Activated T-helper 1 cell treated with anti-CD3 and anti-CD28 coated beads, Interleukin-12 subunit alpha, Interleukin-12 subunit beta, Interleukin-2, Interleukin-4 antibody, amounts not matched to agents 30 ng/mL and 10 ng/mL and 1 ng/mL, durations not matched to agents 14 hours and 24 hours and 36 hours (primary cell): ENCODE measurements at regions of chr17 and their contacts with region 1.

Region 1: DNA sequence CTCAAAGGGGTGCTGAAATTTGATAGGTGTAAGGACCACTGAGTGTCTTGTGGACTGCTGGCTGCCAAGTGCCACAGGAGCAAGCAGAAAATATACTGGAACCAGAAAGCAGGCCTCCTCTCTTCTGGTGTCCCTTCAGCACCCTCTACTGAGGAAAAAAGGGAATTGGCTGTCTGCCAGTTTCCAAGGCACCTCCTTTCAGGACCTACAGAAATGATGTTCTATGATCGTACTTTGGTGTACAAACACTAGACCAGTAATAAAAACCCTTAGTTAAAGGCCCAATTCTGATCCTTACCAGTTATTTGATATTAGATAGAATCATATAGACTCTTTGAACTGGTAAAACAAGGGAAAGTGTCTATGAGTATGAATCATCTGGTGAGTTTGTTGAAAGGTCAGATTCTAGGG is 35.8 kb upstream of the BCAS3 start:
- DNase-seq: peak; percentile 26
- H3K4me3 Mint-ChIP-seq: no peak overlapping the region
- H3K27ac Mint-ChIP-seq: no peak overlapping the region
- H3K4me1 Mint-ChIP-seq: peaks cover 15% of the 10 kb centered on the region
- H3K27me3 Mint-ChIP-seq: no peaks in the 10 kb centered on the region

Region 2: DNA sequence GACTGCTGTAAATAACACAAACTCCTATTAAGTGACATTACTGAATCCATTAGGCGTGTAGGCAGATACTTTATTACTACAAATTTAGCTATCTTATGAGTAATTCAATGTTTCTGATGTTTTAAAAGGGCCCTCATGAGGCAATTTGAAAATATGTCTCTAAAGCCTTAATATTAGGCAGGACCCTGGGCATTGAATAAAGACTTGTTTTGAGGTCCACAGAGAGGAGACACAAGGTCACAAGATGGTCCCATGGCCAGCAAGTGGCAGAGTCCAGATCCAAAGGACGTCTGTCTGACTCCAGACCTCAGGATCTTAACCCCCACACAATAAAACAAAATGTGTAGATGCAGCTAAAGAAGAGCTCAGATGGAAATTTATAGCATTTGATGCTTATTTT is 531.3 kb before region 1 on chr17:
- intact Hi-C with region 1: no loop called
- DNase-seq: no peak
- H3K4me3 Mint-ChIP-seq: no peak overlapping the region
- H3K27ac Mint-ChIP-seq: no peak overlapping the region
- H3K4me1 Mint-ChIP-seq: no peaks in the 10 kb centered on the region
- H3K27me3 Mint-ChIP-seq: peaks cover 21% of the 10 kb centered on the region

Region 3: GRCh38 chr17:60421273-60421934 is 220.4 kb before region 1 on chr17:
- intact Hi-C with region 1: loop called (anchors 1 kb)
- DNase-seq: peak; percentile 63
- H3K4me3 Mint-ChIP-seq: peak overlapping the region; percentile 78
- H3K27ac Mint-ChIP-seq: peak overlapping the region; percentile 42
- H3K4me1 Mint-ChIP-seq: peaks cover 7% of the 10 kb centered on the region
- H3K27me3 Mint-ChIP-seq: peaks cover 6% of the 10 kb centered on the region

Region 4: DNA sequence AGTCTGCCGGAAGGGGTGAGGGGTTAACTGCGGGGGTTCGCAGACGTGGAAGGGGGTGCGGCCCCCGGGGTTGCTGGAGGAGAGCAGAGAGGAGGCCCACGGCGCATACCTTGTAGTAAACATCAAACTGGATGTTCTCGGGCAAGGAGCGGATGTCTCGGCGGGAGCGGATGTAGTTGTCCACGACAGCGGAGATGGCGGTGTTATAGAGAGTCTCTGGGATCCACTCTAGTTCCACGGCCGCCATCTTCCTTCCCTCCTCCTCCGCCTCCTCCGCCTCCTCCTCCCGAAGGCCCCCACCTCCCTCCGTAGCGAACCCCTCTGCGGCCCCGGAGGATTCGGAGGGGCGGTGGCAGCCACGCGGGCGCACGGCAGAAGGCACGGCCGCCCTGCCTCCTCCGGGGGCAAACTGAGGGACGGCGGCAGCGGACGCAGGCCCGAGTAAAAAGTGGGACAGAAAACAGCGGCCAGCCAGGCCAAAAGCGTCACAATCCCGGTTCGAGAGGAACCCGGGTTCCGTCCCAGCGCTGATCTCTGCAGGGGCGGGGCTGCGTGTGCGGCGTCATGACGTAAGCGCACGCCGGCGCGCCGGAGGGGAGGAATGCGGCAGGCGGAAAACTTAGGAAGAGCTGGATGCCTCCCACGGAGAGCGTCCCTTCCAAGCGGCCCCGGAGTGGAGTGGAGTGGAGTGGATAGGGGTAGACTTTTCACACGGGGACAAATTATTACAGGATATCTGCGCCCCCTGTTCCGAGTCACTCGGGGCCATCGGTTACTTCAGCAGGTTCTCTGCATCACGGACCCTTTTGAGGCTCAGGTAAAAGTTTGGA is 115.9 kb before region 1 on chr17 and contains the start of gene APPBP2:
- intact Hi-C with region 1: loop called (anchors 1 kb)
- DNase-seq: peak; percentile 69
- H3K4me3 Mint-ChIP-seq: peak within 1 kb of the TSS; percentile 98
- H3K27ac Mint-ChIP-seq: peak within 1 kb of the TSS; percentile 96
- H3K4me1 Mint-ChIP-seq: peaks cover 49% of the 10 kb centered on the region
- H3K27me3 Mint-ChIP-seq: no peaks in the 10 kb centered on the region
- total RNA-seq, gene APPBP2: 23.4 and 28.1 TPM in 2 replicates

Region 5: GRCh38 chr17:60577147-60577915 is 64.5 kb before region 1 on chr17:
- intact Hi-C with region 1: loop called (anchors 2 kb)
- DNase-seq: no peak
- H3K4me3 Mint-ChIP-seq: peak overlapping the region; percentile 68
- H3K27ac Mint-ChIP-seq: no peak overlapping the region
- H3K4me1 Mint-ChIP-seq: peaks cover 10% of the 10 kb centered on the region
- H3K27me3 Mint-ChIP-seq: peaks cover 8% of the 10 kb centered on the region

Region 6: GRCh38 chr17:60599620-60600489 is 42.0 kb before region 1 on chr17 and contains the start of gene PPM1D:
- intact Hi-C with region 1: loop called (anchors 1 kb)
- DNase-seq: peak; percentile 97
- H3K4me3 Mint-ChIP-seq: peak within 1 kb of the TSS; percentile 95
- H3K27ac Mint-ChIP-seq: peak within 1 kb of the TSS; percentile 95
- H3K4me1 Mint-ChIP-seq: peaks cover 44% of the 10 kb centered on the region
- H3K27me3 Mint-ChIP-seq: no peaks in the 10 kb centered on the region
- total RNA-seq, gene PPM1D: 18.6 and 19.7 TPM in 2 replicates

Region 7: GRCh38 chr17:60677308-60678124 is 35.7 kb after region 1 on chr17 and contains the start of gene BCAS3:
- intact Hi-C with region 1: loop called (anchors 1 kb)
- DNase-seq: peak; percentile 97
- H3K4me3 Mint-ChIP-seq: peak within 1 kb of the TSS; percentile 89
- H3K27ac Mint-ChIP-seq: peak within 1 kb of the TSS; percentile 62
- H3K4me1 Mint-ChIP-seq: peaks cover 19% of the 10 kb centered on the region
- H3K27me3 Mint-ChIP-seq: no peaks in the 10 kb centered on the region
- total RNA-seq, gene BCAS3: 8.3 and 8.5 TPM in 2 replicates

Region 8: GRCh38 chr17:61970019-61970418 is 1328.2 kb after region 1 on chr17:
- intact Hi-C with region 1: no loop called
- DNase-seq: no peak
- H3K4me3 Mint-ChIP-seq: no peak overlapping the region
- H3K27ac Mint-ChIP-seq: no peak overlapping the region
- H3K4me1 Mint-ChIP-seq: no peaks in the 10 kb centered on the region
- H3K27me3 Mint-ChIP-seq: no peaks in the 10 kb centered on the region